Left colon (tissue), 2 donors: ENCODE measurements at regions of chr4 and their contacts with region 1.

Region 1: GRCh38 chr4:68271851-68272756 is 26.6 kb upstream of the TMPRSS11B start:
- DNase-seq: no peak
- ATAC-seq: peak; percentile 59

Region 2: GRCh38 chr4:68375667-68376559 is 103.8 kb after region 1 on chr4:
- intact Hi-C with region 1: loop called (anchors 2 to 10 kb)
- DNase-seq: peak in 1 of 2 donors; percentile 50
- ATAC-seq: peak; percentile 95